Spleen (tissue), 13 donors: ENCODE measurements at regions of chr1 and their contacts with region 1.

Region 1: DNA sequence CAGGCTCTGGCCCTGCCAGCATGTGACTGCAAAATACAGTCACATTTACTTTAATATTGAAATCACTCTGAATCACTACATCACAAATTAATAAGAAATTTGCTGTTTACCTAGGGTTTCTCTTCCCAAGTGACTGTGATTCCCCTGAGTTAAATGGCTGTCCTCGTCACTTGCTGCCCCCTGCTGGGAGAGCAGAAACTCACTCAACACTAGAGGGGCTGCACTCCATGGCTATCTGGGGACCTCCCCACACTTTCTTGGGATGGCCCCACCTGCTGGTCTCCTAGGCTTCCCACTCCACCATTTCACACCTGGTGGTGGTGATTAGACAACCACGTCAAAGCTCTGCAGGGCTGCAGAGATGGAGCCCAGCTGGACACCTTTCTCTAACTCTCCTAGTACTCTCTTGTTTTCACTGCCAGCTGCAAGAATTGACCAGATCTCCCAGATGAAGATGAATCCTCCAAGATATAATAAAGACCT is 63.4 kb downstream of the CD2 start:
- DNase-seq: peak; percentile 82
- H3K4me3 ChIP-seq: no peak overlapping the region
- H3K27ac ChIP-seq: no peak overlapping the region
- H3K4me1 ChIP-seq: peaks cover 0 to 32% (median 19%) of the 10 kb centered on the region in 6 donors
- H3K27me3 ChIP-seq: no peaks in the 10 kb centered on the region
- CTCF ChIP-seq: peak in 10 of 11 experiments; percentile 27 to 73 (median 59)
- POLR2A ChIP-seq: no peak

Region 2: DNA sequence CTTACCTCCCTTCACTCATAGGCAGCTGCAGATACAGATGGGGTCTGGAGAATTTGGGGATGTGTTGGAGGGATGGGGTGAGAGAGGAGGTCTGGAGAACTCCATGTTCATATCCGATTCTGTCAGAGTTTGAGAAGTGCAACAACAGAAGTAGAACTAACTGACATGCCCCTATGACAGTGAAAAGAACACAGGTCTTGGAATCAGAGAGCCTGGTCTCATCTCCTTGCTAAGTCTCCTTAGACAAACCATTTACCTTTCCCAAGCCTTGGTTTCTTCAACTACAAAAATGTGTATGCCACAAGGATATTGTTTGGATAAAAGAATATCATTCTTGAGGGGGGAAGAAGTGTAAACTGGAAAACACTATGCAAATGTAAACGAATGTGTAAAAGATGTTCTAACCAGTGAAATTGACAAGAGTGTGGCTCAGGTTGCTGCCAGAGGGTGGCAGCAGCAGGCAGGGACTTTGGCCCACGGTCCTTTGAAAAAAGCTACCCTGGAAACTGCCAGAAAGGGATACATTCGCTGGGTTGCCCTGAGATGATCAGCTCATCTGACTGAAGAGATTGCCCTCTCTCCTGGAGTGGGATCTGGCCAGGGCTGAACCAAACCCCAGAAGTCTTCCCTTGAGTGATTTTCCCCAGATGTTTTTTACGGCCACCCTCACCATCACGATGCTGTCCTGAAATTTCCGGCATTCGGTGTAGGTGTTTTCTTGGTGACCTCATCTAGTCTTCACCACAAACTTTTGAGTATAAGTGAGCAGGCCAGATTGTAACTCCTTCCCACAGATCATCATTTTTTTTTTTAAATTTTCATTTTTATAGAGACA is 80.4 kb before region 1 on chr1:
- intact Hi-C with region 1: loop called (anchors 5 kb)
- DNase-seq: peak; percentile 84
- H3K4me3 ChIP-seq: peak overlapping the region in 2 of 8 donors; percentile 3 to 31
- H3K27ac ChIP-seq: peak overlapping the region; percentile 11 to 84 (median 63)
- H3K4me1 ChIP-seq: peaks cover 11 to 38% (median 26%) of the 10 kb centered on the region in 6 donors
- H3K27me3 ChIP-seq: no peaks in the 10 kb centered on the region
- CTCF ChIP-seq: peak; percentile 61 to 84 (median 75)
- POLR2A ChIP-seq: no peak